Thyroid gland (tissue), 4 donors: ENCODE measurements at regions of chr9 and their contacts with region 1.

Region 1: GRCh38 chr9:35882263-35882848 is 12.2 kb upstream of the OR13J1 start:
- DNase-seq: peak; percentile 86 to 92
- H3K4me3 ChIP-seq: no peak overlapping the region
- H3K27ac ChIP-seq: no peak overlapping the region
- H3K4me1 ChIP-seq: no peaks in the 10 kb centered on the region
- H3K27me3 ChIP-seq: no peaks in the 10 kb centered on the region
- CTCF ChIP-seq: peak; percentile 89 to 94 (median 94)
- POLR2A ChIP-seq: no peak

Region 2: DNA sequence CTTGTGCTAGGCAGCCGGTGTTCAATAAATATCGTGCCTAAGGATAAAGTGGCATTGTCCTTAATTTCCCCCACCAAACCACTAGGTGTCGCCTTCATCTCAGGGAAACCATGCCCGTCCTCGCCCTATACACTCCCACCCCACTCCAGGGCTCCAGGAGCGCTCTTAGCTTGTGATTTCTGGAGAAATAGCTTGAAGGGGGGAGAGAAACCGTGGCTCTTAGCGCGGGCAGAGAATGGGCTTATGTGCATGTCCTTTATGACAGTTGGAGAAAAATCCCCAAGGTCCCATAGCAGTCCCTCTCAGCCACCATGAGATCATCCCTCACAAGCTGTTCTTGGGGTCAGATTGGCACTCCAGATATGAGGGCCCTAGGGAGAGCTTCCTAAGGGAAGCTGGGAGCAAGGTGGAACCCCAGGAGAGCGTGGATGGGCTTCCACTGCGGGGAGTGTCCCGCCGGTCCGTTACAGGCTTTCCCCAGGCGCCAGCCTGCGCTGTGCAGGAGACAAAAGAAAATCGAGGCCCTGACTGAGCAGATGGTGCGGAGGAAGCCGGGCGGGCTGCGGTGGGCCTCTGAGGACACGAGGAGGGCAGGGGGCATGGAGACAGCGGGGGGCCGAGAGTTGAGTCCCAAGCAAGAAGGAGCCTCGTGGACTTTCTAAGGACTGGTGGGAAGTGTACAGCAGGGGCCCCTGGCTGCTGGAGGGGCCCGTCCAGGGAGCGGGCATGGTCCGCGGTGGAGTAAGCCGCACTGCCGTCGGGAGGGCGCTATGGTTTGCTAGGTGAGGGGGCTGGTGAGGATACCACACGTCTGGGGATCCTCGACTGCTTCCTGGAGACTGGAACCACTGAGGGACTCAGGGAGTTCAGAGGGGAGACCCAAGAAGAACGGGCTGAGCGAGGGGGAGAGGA is 91.7 kb before region 1 on chr9:
- intact Hi-C with region 1: loop called (anchors 2 kb)
- DNase-seq: peak; percentile 70 to 73
- H3K4me3 ChIP-seq: peak overlapping the region in 1 of 3 donors; percentile 38
- H3K27ac ChIP-seq: no peak overlapping the region
- H3K4me1 ChIP-seq: peaks cover 8 to 13% of the 10 kb centered on the region in 2 donors
- H3K27me3 ChIP-seq: no peaks in the 10 kb centered on the region
- CTCF ChIP-seq: peak; percentile 57 to 98 (median 85)
- POLR2A ChIP-seq: no peak

Region 3: DNA sequence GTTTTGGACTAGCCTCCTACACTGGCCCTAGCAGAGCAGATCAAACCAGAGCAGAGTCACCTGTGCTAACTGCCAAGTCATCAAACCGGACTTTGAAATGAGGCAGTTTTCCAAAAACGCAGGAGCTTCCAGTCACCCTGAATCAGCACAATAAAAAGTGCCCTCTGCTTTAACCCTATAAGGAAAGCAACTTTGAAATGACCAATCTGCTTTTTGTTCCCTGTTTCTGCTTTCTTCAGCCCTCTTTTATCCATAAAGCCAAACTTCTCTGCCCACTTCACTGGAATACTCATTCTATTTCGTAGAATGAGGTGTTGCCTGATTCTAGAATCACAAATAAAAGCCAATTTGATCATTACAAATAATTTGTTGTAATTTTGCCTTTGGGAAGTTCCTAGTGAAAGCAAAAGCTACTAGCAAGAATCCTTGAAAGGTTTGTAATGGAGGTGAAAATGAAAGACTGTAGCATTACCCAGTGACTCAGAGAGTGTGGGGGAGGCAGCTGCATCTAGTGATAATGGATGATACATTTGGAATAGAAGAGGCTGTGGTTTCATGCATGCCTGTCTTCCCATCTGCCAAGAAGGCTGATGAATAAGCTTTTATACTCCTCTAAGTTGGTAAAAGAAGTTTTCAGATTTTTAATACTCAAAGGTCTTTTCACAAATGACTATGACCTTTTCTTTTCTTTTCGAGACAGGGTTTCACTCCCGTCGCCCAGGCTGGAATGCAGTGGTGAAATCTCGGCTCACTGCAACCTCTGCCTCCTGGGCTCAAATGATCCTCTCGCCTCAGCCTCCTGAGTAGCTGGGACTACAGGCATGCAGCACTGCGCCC is 41.8 kb after region 1 on chr9:
- intact Hi-C with region 1: no loop called
- DNase-seq: peak; percentile 63 to 68
- H3K4me3 ChIP-seq: no peak overlapping the region
- H3K27ac ChIP-seq: peak overlapping the region; percentile 60 to 77 (median 75)
- H3K4me1 ChIP-seq: peaks cover 19 to 36% of the 10 kb centered on the region in 2 donors
- H3K27me3 ChIP-seq: no peaks in the 10 kb centered on the region
- CTCF ChIP-seq: no peak
- POLR2A ChIP-seq: peak in 1 of 2 donors; percentile 9

Region 4: GRCh38 chr9:35972093-35972492 is 89.7 kb after region 1 on chr9:
- intact Hi-C with region 1: no loop called
- DNase-seq: no peak
- H3K4me3 ChIP-seq: no peak overlapping the region
- H3K27ac ChIP-seq: no peak overlapping the region
- H3K4me1 ChIP-seq: no peaks in the 10 kb centered on the region
- H3K27me3 ChIP-seq: peaks cover 4% of the 10 kb centered on the region
- CTCF ChIP-seq: no peak
- POLR2A ChIP-seq: no peak